ENCODE measurements at regions of chr17 and their contacts with region 1.

Region 1: DNA sequence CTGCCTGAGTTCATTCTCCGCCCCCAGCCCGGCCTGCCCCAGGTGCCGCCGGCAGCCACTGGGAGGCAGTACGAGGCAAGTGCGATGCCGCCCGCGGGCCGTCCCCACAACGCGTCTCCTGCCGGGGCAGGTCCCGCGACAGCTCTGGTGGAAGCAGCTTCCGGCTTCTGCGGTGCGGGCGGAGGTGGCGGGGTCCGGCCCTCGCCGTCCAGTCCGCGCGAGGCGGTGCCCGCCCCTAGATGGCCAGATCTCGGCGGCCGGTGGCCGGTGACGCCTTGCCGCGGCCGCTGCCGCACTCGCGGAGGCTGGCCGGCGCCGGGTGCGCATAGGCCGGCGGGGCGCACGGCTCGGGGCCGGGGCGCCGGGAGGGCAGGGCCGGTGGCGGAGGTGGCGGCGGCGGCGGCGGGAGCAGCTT is 1.8 kb downstream of the GJD3 start:
- ATAC-seq: peak; percentile 66 to 71 (median 68)
- H3K4me3 ChIP-seq: peak overlapping the region; percentile 35 to 48 (median 41)
- H3K27ac ChIP-seq: peak overlapping the region in 1 of 2 donors; percentile 74
- H3K4me1 ChIP-seq: peaks cover 18 to 21% of the 10 kb centered on the region in 2 donors

Region 2: DNA sequence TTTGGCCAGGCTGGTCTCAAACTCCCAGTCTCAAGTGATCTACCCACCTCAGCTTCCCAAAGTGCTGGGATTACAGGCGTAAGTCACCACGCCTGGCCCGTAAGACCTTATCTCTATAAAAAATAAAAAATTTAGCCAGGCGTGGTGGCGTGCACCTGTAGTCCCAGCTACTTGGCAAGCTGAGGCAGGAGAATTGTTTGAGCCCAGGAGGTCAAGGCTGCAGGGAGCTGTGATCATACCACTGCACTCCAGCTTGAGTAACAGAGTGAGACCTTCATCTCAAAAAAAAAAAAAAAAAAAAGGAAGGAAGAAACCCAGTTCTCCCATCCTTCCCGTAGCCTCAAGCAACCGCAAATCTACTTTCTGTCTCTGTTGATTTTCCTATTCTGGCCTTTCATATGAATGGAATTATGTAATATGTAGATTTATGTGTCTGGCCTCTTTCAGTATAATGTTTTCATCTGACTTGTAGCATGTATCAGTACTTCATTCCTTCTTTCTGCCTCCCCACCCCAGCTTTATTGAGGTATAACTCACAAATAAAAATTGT is 211.2 kb before region 1 on chr17:
- in situ Hi-C with region 1: no loop called
- ATAC-seq: peak in 2 of 8 experiments; percentile 17 to 87
- H3K4me3 ChIP-seq: no peak overlapping the region
- H3K27ac ChIP-seq: no peak overlapping the region
- H3K4me1 ChIP-seq: no peaks in the 10 kb centered on the region

Region 3: DNA sequence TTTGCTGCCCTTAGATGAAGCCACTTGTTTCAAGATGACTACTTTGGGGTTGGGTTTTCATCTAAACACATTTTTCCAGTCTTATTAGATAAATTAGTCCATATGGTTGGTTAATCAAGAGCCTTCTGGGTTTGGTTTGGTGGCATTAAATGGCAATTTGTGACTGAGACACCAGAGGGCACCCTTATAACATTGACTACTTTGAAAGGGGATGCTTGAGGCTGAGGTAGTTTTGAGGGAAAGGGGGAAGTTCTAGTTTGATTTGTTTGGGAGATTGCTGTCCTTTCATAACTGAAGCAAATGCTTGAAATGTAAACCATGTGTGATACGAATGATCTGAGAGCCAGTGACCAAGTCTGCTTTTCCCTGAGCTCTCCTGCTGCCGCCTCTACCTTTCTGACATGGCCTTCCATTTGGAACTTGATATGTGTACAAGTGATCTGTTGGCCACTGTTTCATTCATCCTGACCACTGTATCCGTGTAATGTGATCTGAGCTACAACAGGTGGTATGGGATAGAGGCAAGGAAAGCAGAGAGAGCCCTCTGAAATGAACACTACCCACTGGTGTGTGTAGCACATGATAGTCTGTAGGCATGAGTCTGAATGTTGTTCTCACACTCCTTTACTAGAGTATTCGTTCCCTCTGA is 59.6 kb before region 1 on chr17:
- in situ Hi-C with region 1: loop called in 4 of 9 experiments (anchors 10 kb)
- ATAC-seq: peak; percentile 28 to 58 (median 46)
- H3K4me3 ChIP-seq: no peak overlapping the region
- H3K27ac ChIP-seq: no peak overlapping the region
- H3K4me1 ChIP-seq: peaks cover 33 to 39% of the 10 kb centered on the region in 2 donors

Region 4: DNA sequence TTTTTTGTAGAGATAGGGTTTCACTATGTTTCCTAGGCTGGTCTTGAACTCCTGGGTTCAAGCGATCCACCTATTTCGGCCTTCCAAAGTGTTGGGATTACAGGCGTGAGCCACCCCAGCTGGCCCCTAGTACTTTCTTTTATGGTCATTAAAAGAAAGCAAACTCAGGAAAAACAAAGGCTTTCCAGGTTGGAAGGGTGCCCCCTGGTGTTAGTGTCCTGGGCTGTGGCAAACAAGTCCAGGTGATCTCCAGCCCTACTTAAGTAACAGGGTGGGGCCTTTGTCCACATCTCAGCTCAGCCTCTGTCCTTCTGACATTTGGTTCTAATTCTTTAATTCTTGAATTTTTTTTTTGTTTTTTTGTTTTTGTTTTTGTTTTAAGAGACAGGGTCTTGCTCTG is 87.5 kb after region 1 on chr17:
- in situ Hi-C with region 1: loop called in 1 of 9 experiments (anchors 25 kb)
- ATAC-seq: peak in 1 of 8 experiments; percentile 26
- H3K4me3 ChIP-seq: no peak overlapping the region
- H3K27ac ChIP-seq: no peak overlapping the region
- H3K4me1 ChIP-seq: peaks cover 14 to 18% of the 10 kb centered on the region in 2 donors

Region 5: DNA sequence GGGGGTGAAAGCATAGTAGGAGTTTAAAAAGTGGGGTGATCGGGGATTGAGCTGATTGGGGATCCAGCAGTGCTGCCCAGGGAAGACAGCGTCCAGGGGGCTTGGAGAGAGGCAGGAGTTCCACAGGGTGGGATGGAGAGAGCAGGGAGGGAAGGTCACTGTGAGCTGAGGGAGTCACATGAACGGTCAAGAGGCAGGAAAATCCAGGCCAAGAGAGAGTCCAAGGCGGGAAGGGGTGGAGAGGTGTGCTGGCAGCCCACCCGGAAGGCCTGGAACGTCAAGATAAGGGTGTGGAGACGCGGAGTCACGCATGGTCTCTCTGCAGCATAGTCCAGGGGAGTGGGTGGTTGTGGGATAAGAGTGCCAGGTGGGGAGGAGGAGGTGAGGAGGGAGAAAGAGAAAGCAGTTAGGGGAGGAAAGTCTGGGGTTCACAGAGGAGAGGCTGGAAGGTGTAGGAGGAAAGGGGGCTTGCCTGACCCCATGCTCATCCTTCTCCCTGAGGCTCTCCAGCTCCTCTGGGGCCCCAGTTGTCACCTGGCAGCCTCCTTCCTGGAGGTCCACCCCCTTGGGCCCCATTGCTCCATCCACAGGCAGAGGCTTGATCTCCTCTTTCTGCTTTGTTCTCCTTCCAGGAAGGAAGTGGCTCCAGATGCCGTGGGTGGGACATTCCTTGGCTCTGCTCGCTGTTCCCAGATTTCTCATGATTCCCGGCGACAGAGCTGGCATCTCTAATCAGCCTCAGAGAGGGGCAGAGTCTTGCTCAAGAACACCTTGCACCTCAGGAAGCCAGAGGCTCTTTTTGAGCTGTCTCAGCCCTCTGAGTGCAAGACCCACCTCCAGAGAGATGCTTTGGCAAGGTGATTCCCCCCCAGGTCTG is 173.8 kb after region 1 on chr17:
- in situ Hi-C with region 1: loop called in 3 of 9 experiments (anchors 10 to 25 kb)
- ATAC-seq: peak in 2 of 8 experiments; percentile 7 to 9
- H3K4me3 ChIP-seq: no peak overlapping the region
- H3K27ac ChIP-seq: no peak overlapping the region
- H3K4me1 ChIP-seq: peaks cover 7 to 13% of the 10 kb centered on the region in 2 donors

Region 6: DNA sequence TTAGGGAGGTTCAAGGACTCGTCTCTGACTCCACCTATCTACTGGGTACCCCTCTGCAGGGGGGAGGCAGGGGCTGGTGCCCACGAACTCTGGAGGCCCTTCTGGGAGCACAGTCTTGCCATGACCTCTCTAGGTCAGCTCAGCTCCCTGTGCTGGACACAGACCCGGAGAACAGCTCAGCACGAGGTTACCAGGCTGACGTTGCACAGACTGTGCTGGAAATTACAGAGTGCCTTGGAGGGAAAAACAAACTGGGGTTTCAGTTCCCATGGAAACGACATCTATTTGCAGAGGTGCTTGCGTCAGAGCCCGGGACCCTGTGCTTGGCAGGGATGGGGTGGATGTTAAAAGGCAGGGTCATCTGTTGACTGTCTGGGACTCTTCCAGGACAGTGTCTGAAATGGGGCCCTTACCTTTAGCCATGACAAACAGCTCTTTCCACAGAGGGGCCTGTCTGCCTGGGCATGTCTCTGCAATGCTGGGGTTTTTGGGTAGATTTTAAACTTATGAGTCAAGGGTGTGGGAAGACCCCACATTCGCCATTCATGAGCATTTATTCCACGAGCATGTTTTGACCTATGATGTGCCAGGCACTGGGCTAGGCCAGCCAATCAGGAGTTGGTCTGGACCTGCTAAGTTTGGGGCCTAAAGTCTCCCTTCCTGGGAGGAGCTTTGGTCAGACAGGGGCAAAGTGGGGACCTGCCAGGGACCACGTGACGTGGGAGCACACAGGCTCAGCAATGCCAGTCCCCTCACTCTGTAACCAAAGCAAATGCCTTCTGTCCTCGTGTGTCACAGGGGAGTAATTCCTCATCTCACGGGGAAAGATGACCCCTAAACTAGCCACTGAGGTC is 180.1 kb after region 1 on chr17:
- in situ Hi-C with region 1: loop called in 3 of 9 experiments (anchors 10 to 25 kb)
- ATAC-seq: peak; percentile 80 to 96 (median 92)
- H3K4me3 ChIP-seq: no peak overlapping the region
- H3K27ac ChIP-seq: peak overlapping the region; percentile 87 to 89
- H3K4me1 ChIP-seq: peaks cover 29 to 38% of the 10 kb centered on the region in 2 donors

Region 7: GRCh38 chr17:40559954-40560591 is 197.4 kb after region 1 on chr17:
- in situ Hi-C with region 1: loop called in 1 of 9 experiments (anchors 25 kb)
- ATAC-seq: peak; percentile 72 to 98 (median 86)
- H3K4me3 ChIP-seq: no peak overlapping the region
- H3K27ac ChIP-seq: no peak overlapping the region
- H3K4me1 ChIP-seq: peaks cover 20 to 28% of the 10 kb centered on the region in 2 donors

Measured in motor neuron (in vitro differentiated cells).